ENCODE measurements at regions of chr19 and their contacts with region 1.

Region 1: GRCh38 chr19:54851353-54851752 is 1.1 kb downstream of the KIR3DL2 start:
- DNase-seq: no peak
- H3K4me3 ChIP-seq: no peak overlapping the region
- H3K27ac ChIP-seq: no peak overlapping the region
- H3K4me1 ChIP-seq: no peaks in the 10 kb centered on the region
- H3K27me3 ChIP-seq: peaks cover 80% of the 10 kb centered on the region
- CTCF ChIP-seq: no peak

Region 2: DNA sequence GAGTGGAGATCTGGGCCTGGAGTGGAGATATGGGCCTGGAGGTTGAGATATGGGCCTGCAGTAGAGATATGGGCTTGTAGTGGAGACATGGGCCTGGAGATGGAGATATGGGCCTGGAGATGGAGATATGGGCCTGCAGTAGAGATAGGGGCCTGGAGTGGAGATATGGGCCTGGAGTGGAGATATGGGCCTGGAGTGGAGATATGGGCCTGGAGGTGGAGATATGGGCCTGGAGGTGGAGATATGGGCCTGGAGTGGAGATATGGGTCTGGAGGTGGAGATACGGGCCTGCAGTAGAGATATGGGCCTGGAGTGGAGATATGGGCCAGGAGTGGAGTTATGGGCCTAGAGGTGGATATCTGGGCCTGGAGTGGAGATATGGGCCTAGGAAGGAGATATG is 112.6 kb before region 1 on chr19:
- CTCF ChIA-PET with region 1: no interaction called
- POLR2A ChIA-PET with region 1: no interaction called
- intact Hi-C with region 1: loop called (anchors 5 kb)
- DNase-seq: no peak
- H3K4me3 ChIP-seq: no peak overlapping the region
- H3K27ac ChIP-seq: no peak overlapping the region
- H3K4me1 ChIP-seq: no peaks in the 10 kb centered on the region
- H3K27me3 ChIP-seq: peaks cover 56% of the 10 kb centered on the region
- CTCF ChIP-seq: no peak

Measured in PC-9 (cell line).